ENCODE measurements at regions of chr6 and their contacts with region 1.

Region 1: DNA sequence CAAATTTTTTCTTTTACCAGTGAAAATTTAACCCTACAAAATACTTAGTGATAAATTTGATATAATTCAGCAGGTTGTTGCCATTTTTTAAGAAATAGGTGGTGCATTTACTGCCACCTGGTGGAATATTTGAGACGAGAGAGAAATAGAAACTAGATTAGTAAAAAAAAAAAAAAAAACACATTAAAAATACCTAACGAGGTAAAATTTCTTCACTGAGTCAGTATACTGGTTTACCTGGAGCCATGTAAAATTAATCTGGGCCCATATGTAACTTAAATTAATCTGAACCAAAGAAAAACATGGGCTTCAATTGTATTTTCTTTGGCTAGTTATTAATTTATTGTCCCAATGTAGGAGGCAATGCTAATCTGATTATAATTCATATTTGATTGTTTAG is 520.8 kb downstream of the EPM2A start:
- DNase-seq: peak; percentile 45
- H3K4me3 ChIP-seq: no peak overlapping the region
- H3K27ac ChIP-seq: no peak overlapping the region
- H3K4me1 ChIP-seq: no peaks in the 10 kb centered on the region
- H3K27me3 ChIP-seq: no peaks in the 10 kb centered on the region
- CTCF ChIP-seq: peak; percentile 18 to 27
- POLR2A ChIP-seq: no peak

Region 2: GRCh38 chr6:144820270-144820669 is 394.3 kb before region 1 on chr6:
- CTCF ChIA-PET with region 1: no interaction called
- POLR2A ChIA-PET with region 1: no interaction called
- dilution Hi-C with region 1: no loop called
- intact Hi-C with region 1: loop called (anchors 10 kb)
- DNase-seq: no peak
- H3K4me3 ChIP-seq: no peak overlapping the region
- H3K27ac ChIP-seq: no peak overlapping the region
- H3K4me1 ChIP-seq: no peaks in the 10 kb centered on the region
- H3K27me3 ChIP-seq: no peaks in the 10 kb centered on the region
- CTCF ChIP-seq: no peak
- POLR2A ChIP-seq: no peak

Region 3: DNA sequence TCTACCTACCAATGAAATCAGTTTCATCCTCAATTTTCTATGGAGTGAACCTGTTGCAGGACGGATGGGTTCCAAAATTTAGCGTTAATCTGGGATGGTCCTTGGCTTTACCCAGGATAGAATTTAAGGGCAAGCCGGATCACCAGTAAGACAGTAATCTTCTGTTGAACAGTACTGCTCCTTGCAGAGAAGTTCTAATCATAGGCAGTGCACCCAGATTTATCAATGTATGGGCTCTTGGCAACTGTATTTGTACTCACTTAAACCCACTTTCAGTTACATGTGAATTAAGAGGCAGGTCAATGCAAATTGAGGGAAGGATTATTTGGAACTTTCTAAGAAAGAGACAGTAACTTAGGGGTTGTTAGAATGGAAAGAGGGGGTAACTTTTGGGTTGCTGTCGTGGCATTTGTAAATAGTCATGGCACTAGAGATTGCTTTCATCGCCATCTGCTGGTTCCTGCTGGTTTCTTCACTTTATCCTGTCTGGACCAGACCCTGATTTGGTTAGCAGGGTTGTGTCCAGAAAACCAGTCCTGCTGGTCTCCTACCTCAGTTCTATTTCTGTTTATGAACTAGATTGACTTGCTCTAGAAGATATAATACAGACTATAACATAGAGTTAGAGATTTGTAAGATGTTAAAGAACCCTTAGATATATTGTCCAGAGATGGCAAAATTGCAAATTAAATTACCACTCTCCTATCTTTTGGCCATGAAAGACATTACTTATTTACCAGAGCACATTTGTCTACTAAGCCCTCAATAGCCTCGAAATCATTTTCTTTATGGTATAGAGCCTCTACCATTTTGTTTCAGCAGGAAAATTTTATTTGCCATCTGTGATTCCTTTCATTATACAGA is 283.2 kb before region 1 on chr6:
- CTCF ChIA-PET with region 1: no interaction called
- POLR2A ChIA-PET with region 1: no interaction called
- dilution Hi-C with region 1: no loop called
- intact Hi-C with region 1: loop called (anchors 10 kb)
- DNase-seq: peak; percentile 34
- H3K4me3 ChIP-seq: no peak overlapping the region
- H3K27ac ChIP-seq: no peak overlapping the region
- H3K4me1 ChIP-seq: no peaks in the 10 kb centered on the region
- H3K27me3 ChIP-seq: no peaks in the 10 kb centered on the region
- CTCF ChIP-seq: peak; percentile 47 to 68
- POLR2A ChIP-seq: no peak

Region 4: DNA sequence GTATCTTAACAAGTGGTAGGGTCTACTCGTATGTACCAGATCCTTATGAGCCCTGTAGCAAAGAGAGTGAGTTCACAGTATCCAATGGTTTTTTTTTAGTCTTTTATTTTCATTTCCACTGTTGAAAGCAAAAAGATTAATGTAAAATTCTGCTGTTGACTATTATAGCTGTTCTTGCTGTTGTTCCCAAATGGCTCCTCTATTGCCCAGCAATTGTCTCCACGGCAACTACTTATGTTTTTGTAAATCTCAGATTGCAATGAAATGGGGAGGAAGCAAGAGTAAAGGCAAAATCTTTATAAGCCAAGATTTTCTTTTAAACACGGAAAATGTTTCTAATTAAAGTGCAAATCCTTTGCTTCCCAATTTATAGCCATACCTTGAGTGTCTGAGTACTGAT is 114.7 kb after region 1 on chr6:
- CTCF ChIA-PET with region 1: no interaction called
- POLR2A ChIA-PET with region 1: no interaction called
- dilution Hi-C with region 1: no loop called
- intact Hi-C with region 1: no loop called
- DNase-seq: no peak
- H3K4me3 ChIP-seq: no peak overlapping the region
- H3K27ac ChIP-seq: no peak overlapping the region
- H3K4me1 ChIP-seq: no peaks in the 10 kb centered on the region
- H3K27me3 ChIP-seq: no peaks in the 10 kb centered on the region
- CTCF ChIP-seq: no peak
- POLR2A ChIP-seq: no peak

Region 5: DNA sequence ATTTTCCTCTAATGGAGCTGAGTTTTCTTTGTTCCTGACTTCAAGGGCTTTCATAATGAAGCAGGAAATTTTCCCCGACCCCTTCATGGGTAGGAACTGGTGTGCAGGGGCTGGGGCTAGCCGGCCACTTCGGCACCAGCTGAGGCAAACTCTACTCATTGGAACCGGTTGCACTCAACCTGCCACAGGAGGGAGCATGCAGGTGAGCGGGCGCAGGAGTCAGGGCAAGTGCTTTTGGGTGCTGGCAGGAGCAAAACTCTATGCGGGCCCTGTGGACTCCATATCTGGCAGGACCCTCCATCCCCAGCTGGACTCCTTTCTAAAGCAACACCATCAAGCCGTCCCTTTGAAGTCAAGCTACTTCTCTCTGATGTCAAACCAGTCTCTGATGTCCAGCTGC is 276.6 kb after region 1 on chr6:
- CTCF ChIA-PET with region 1: no interaction called
- POLR2A ChIA-PET with region 1: no interaction called
- dilution Hi-C with region 1: no loop called
- intact Hi-C with region 1: no loop called
- DNase-seq: no peak
- H3K4me3 ChIP-seq: no peak overlapping the region
- H3K27ac ChIP-seq: no peak overlapping the region
- H3K4me1 ChIP-seq: no peaks in the 10 kb centered on the region
- H3K27me3 ChIP-seq: no peaks in the 10 kb centered on the region
- CTCF ChIP-seq: no peak
- POLR2A ChIP-seq: no peak